Panc1 (cell line): ENCODE measurements at regions of chr17 and their contacts with region 1.

Region 1: GRCh38 chr17:7484919-7485377 is 782 bp downstream of the POLR2A start:
- DNase-seq: no peak
- ATAC-seq: no peak
- H3K4me3 ChIP-seq: peak overlapping the region; percentile 91 to 95
- H3K27ac ChIP-seq: peak overlapping the region; percentile 99
- H3K4me1 ChIP-seq: peaks cover 35% of the 10 kb centered on the region
- H3K27me3 ChIP-seq: no peaks in the 10 kb centered on the region
- CTCF ChIP-seq: no peak

Region 2: DNA sequence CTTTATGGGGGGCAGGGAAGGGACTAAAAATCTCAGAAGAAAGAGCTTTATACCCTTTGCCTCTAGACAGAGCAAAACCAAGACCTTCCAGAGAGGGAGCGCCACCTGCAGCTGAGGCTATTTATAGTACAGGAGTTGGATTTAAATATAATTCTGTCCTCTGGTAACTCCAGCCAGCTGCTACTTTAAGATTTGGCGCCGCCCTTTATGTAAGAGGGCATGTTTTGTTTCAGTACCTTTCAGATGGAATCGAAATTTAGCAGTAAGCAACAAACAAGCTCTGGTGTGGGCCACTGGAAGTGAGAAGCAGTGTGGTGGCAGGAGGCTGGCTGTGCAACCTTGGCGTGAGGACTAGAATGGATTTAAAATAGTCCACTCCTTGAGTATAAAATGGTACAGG is 512.2 kb after region 1 on chr17:
- CTCF ChIA-PET with region 1: no interaction called
- POLR2A ChIA-PET with region 1: interaction called, 11 read pairs
- in situ Hi-C with region 1: no loop called
- intact Hi-C with region 1: no loop called
- DNase-seq: no peak
- ATAC-seq: peak; percentile 82
- H3K4me3 ChIP-seq: no peak overlapping the region
- H3K27ac ChIP-seq: no peak overlapping the region
- H3K4me1 ChIP-seq: 0 out of 2 replicates have a peak, but pooled peaks cover 3% of the 10 kb centered on the region
- H3K27me3 ChIP-seq: peaks cover 6% of the 10 kb centered on the region; the same call in 1 of the 2 replicates
- CTCF ChIP-seq: peak; percentile 80